ENCODE measurements at regions of chr4 and their contacts with region 1.

Region 1: GRCh38 chr4:66688674-66689073 is 856.6 kb downstream of the CENPC start:
- DNase-seq: peak; percentile 33
- H3K4me3 Mint-ChIP-seq: no peak overlapping the region
- H3K27ac Mint-ChIP-seq: no peak overlapping the region
- H3K4me1 Mint-ChIP-seq: no peaks in the 10 kb centered on the region
- H3K27me3 Mint-ChIP-seq: no peaks in the 10 kb centered on the region
- CTCF ChIP-seq: peak; percentile 29

Region 2: GRCh38 chr4:64781737-64782326 is 1906.8 kb before region 1 on chr4:
- CTCF ChIA-PET with region 1: no interaction called
- POLR2A ChIA-PET with region 1: no interaction called
- intact Hi-C with region 1: loop called (anchors 2 kb)
- DNase-seq: peak; percentile 57
- H3K4me3 Mint-ChIP-seq: no peak overlapping the region
- H3K27ac Mint-ChIP-seq: no peak overlapping the region
- H3K4me1 Mint-ChIP-seq: no peaks in the 10 kb centered on the region
- H3K27me3 Mint-ChIP-seq: no peaks in the 10 kb centered on the region
- CTCF ChIP-seq: peak; percentile 60

Region 3: GRCh38 chr4:65416891-65417290 is 1271.8 kb before region 1 on chr4:
- CTCF ChIA-PET with region 1: no interaction called
- POLR2A ChIA-PET with region 1: no interaction called
- intact Hi-C with region 1: loop called (anchors 10 kb)
- DNase-seq: peak; percentile 8
- H3K4me3 Mint-ChIP-seq: no peak overlapping the region
- H3K27ac Mint-ChIP-seq: no peak overlapping the region
- H3K4me1 Mint-ChIP-seq: no peaks in the 10 kb centered on the region
- H3K27me3 Mint-ChIP-seq: no peaks in the 10 kb centered on the region
- CTCF ChIP-seq: no peak

Region 4: GRCh38 chr4:65580551-65580950 is 1108.1 kb before region 1 on chr4:
- CTCF ChIA-PET with region 1: no interaction called
- POLR2A ChIA-PET with region 1: no interaction called
- intact Hi-C with region 1: loop called (anchors 2 kb)
- DNase-seq: peak; percentile 23
- H3K4me3 Mint-ChIP-seq: no peak overlapping the region
- H3K27ac Mint-ChIP-seq: no peak overlapping the region
- H3K4me1 Mint-ChIP-seq: no peaks in the 10 kb centered on the region
- H3K27me3 Mint-ChIP-seq: no peaks in the 10 kb centered on the region
- CTCF ChIP-seq: peak; percentile 27